BJ (cell line): ENCODE measurements at regions of chr1 and their contacts with region 1.

Region 1: DNA sequence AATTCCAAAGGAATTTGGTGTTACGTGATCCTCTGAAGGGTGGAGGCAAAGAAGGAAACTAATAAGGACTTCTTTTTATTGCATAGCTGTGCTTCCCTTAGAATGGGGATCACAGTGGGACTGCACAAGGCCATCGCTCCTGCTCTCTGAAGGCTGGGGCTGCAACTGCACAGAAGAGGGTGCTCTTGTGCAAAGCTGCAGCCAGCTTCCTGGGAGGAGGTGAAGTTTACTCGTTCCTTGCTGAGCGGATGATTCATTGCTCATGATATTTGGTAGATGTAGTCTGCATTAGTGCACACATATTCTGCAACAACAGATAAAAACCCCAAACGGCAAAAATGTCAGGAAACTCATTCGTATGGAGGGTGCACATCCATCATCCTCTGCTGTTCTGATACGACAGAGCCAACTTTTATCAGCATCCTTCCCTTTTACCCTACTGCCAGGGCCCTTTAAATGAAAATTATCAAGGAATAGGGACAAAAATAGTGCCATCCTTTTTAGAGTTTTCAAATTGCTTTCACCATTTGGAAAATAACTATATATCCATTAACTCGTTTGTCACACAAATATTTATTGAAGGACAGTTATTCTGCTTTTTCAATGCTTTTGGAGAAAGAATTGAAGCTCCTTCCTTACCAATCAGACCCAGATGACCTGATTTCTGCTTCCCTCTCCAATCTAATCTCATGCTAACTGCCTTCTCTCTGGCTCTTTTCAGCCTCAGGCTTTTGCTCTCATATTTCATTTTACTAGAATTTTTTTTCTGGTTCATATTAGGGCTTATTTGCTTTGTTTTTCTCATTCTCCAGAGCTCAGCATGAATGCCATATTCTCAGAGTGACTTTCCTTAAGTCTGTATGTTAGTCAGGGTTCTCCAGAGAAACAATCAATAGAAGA is 263.6 kb downstream of the DUSP10 start:
- DNase-seq: no peak
- H3K4me3 ChIP-seq: no peak overlapping the region
- H3K27me3 ChIP-seq: no peaks in the 10 kb centered on the region
- CTCF ChIP-seq: peak; percentile 93

Region 2: GRCh38 chr1:221363039-221363438 is 115.3 kb before region 1 on chr1:
- CTCF ChIA-PET with region 1: no interaction called
- POLR2A ChIA-PET with region 1: no interaction called
- DNase-seq: no peak
- H3K4me3 ChIP-seq: no peak overlapping the region
- H3K27me3 ChIP-seq: no peaks in the 10 kb centered on the region
- CTCF ChIP-seq: no peak

Region 3: DNA sequence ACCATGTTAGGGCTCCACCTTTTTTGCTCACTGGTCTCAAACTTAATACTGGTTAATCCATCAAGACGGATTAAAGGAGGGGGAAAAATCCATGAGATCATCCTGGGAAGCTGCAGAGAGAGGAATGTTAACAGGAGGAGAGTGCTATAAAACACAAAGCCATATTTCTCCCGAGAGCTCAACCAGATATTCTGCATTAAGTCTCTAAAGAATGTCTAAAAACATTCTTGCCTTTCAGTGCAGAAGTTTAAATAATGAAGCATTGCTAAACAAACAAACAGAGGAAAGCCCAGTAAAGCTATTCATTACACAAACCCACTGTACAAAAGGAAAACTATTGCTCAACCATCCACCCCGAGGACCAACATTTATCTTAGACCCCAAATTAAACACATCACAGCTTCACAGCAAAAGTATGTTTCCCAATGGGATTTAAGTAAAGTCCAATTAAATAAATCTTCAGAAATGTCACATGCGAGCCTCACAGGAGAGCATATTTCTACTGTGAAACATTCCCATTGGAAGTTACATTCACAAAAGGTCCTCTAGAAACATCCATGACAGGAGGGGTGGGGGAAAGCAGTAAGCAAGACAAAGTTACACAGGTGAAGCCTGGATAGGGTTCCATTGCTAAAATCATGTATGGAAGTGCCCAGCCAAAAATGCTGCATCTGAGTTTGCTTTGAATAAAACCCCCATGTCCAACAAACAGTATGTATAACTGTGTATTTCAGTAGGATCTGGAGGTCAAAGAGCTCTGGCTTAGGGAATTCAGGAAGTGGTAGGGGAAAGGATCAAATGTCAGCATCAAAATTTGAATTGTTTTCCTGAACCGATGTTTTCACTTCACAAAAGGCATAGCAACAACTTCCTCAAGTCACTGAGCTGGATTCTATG is 240.3 kb after region 1 on chr1:
- CTCF ChIA-PET with region 1: interaction called, 15 read pairs
- POLR2A ChIA-PET with region 1: no interaction called
- DNase-seq: peak; percentile 98
- H3K4me3 ChIP-seq: no peak overlapping the region
- H3K27me3 ChIP-seq: no peaks in the 10 kb centered on the region
- CTCF ChIP-seq: no peak

Region 4: DNA sequence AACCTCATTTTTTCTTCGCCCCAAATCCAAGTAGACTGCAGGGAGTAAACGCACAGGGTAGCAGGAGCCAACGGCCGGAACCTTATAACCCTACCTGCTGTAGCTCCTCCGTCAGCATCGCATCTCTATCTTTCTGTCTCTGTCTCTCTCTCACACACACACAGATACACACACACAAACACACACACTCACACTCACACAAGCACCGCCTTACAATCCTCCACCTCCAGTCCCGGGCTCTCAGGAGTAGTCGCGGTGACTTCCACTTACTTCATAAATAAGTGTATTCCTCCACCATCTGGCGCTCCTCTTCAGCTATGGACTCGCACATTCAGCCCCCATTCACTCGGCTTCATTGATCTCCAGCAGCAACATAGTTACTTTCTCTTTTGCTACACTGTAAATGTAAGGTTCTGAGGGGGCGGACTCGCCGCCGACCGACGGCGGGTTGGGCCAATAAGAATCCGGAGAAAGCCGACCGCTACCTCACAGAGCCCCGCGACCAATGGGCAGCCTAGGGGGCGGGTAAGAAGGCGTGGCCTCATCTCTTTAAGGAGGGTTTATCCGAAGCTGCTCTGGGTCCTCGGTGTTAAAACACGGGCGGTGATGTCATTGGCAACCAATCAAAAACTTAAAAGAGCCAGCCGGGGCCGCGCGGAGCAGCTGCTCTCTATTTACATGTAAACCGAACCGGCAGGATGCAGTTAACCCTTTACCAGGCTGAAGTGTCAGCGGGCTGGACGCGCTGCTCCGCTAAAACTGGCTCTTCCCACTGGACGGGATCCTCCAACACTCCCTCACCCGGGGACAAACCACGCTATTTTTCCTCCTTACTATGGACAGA is 263.6 kb after region 1 on chr1 and contains the start of gene DUSP10:
- CTCF ChIA-PET with region 1: interaction called, 15 read pairs
- POLR2A ChIA-PET with region 1: no interaction called
- DNase-seq: peak; percentile 99
- H3K4me3 ChIP-seq: peak within 1 kb of the TSS; percentile 84
- H3K27me3 ChIP-seq: no peaks in the 10 kb centered on the region
- CTCF ChIP-seq: 0 out of 2 replicates have a peak, but pooled peaks have one; percentile 9
- polyA plus RNA-seq, gene DUSP10: 13.3 and 16.1 TPM in 2 replicates